ENCODE measurements at regions of chr2 and their contacts with region 1.

Region 1: DNA sequence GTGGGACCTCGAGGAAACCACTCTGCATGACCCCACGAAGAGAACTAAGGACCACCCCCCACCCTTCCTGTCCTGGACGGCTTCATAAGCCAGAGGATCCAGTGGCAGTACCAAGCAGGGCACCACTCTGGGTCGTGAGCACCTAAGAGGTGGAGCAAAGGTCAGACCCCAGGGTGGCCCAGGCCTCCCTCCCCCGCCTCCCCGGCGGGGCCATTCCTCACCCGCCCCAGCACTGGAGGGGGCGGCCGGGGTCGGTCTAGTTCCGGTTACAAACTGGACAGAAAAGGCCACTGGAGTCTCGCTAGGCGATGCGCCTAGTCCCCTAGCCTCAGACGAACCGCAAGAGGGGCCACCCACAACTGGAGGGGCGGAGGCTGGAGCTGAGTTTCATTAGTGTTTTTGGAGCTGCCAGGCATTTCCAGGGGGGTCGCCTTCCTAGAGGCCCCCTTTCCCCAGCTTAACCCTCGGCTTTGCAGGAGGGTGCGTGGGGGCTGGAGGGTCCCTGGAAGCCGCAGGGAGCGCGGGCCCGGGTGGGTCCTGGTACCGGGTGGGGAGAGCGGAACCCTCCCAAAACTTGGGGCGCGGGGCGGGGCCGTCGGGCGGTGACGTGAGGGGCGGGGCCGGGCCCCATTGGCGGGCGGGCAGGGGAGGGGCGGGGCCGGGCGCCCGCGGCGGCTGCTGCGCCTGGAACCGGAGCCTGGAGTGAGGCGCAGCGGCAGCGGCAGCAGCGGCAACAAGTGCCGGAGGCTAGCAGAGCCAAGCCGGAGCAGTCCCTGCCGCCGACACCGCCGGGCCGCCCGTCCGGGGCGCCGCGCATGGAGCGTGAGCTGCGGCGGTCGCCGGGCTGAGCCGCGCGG is at the start of gene B3GNT2:
- DNase-seq: peak; percentile 84 to 88
- ATAC-seq: peak; percentile 89 to 93 (median 92)
- H3K4me3 ChIP-seq: peak within 1 kb of the TSS; percentile 98
- H3K27ac ChIP-seq: peak within 1 kb of the TSS; percentile 80
- H3K4me1 ChIP-seq: peaks cover 13% of the 10 kb centered on the region
- H3K27me3 ChIP-seq: no peaks in the 10 kb centered on the region
- CTCF ChIP-seq: no peak
- total RNA-seq, gene B3GNT2: 2.6 to 3.2 (median 2.9) TPM

Region 2: GRCh38 chr2:61910603-61911002 is 285.0 kb before region 1 on chr2:
- intact Hi-C with region 1: loop called in 1 of 2 experiments (anchors 10 kb)
- DNase-seq: no peak
- ATAC-seq: no peak
- H3K4me3 ChIP-seq: no peak overlapping the region
- H3K27ac ChIP-seq: no peak overlapping the region
- H3K4me1 ChIP-seq: peaks cover 34% of the 10 kb centered on the region
- H3K27me3 ChIP-seq: no peaks in the 10 kb centered on the region
- CTCF ChIP-seq: peak; percentile 15

Region 3: GRCh38 chr2:62293490-62294271 is 98.0 kb after region 1 on chr2:
- intact Hi-C with region 1: loop called in 1 of 2 experiments (anchors 10 kb)
- DNase-seq: peak; percentile 23 to 68
- ATAC-seq: peak; percentile 63 to 80 (median 72)
- H3K4me3 ChIP-seq: peak overlapping the region; percentile 38
- H3K27ac ChIP-seq: peak overlapping the region; percentile 41
- H3K4me1 ChIP-seq: peaks cover 19% of the 10 kb centered on the region
- H3K27me3 ChIP-seq: no peaks in the 10 kb centered on the region
- CTCF ChIP-seq: no peak

Region 4: DNA sequence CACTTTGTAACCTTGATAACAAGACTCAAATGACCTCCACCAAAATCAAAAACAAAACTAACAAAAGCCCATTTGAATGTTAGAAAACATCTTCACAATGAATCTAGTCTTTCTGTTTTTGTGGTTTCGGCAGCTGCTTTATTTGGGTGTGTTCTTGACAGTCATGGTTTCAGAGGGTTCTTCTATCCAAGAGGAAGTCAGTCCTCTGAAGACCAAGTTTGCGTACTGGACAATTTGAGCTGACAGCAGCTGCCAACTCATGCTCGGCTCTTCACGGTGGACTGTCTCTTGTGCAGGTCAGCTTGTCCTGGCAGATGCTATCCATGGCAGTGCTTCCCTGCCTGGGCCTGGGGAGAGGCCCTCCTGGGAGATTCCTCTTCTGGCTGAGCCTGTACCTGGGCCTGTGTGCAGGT is 219.4 kb after region 1 on chr2:
- intact Hi-C with region 1: loop called in 1 of 2 experiments (anchors 10 kb)
- DNase-seq: no peak
- ATAC-seq: no peak
- H3K4me3 ChIP-seq: no peak overlapping the region
- H3K27ac ChIP-seq: no peak overlapping the region
- H3K4me1 ChIP-seq: peaks cover 4% of the 10 kb centered on the region
- H3K27me3 ChIP-seq: no peaks in the 10 kb centered on the region
- CTCF ChIP-seq: no peak